ENCODE measurements at regions of chr12 and their contacts with region 1.

Region 1: DNA sequence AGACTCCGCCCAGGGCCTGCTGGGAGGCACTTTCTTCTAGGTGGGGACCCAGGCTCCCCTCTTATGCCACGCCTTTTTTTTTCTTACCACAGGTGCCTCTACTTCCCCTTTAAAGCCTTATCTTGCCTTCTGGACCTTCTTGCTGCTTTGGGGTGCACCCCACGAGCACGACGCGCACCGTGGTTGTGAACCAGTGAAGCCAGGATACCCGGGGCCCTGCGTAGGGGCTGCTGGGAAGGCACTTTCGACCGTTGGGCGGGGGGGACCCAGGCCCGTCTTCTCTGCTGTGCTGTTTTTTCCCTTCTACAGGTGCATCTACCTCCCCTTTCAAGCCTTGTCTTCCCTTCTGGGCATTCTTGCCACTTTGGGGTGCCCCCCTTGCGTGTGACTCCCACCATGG is 305.4 kb downstream of the ALG10 start:
- DNase-seq: no peak
- ATAC-seq: no peak
- H3K4me3 Mint-ChIP-seq: no peak overlapping the region
- H3K27ac Mint-ChIP-seq: no peak overlapping the region
- H3K4me1 Mint-ChIP-seq: no peaks in the 10 kb centered on the region
- H3K27me3 Mint-ChIP-seq: no peaks in the 10 kb centered on the region

Region 2: GRCh38 chr12:32847287-32847686 is 1480.4 kb before region 1 on chr12:
- CTCF ChIA-PET with region 1: no interaction called
- POLR2A ChIA-PET with region 1: no interaction called
- intact Hi-C with region 1: loop called in 1 of 2 experiments (anchors 5 kb)
- DNase-seq: no peak
- ATAC-seq: no peak
- H3K4me3 Mint-ChIP-seq: no peak overlapping the region
- H3K27ac Mint-ChIP-seq: no peak overlapping the region
- H3K4me1 Mint-ChIP-seq: no peaks in the 10 kb centered on the region
- H3K27me3 Mint-ChIP-seq: peaks cover 6% of the 10 kb centered on the region

Measured in activated CD4-positive, alpha-beta T cell treated with anti-CD3 and anti-CD28 coated beads for 36 hours (primary cell).